Sigmoid colon (tissue), 7 donors: ENCODE measurements at regions of chr1 and their contacts with region 1.

Region 1: GRCh38 chr1:10628685-10629084 is 153.9 kb downstream of the PEX14 start:
- DNase-seq: peak; percentile 88
- H3K4me3 ChIP-seq: no peak overlapping the region
- H3K27ac ChIP-seq: peak overlapping the region; percentile 68 to 84 (median 72)
- H3K4me1 ChIP-seq: peaks cover 0 to 33% (median 24%) of the 10 kb centered on the region in 4 donors
- H3K27me3 ChIP-seq: no peaks in the 10 kb centered on the region
- CTCF ChIP-seq: no peak
- EP300 ChIP-seq: no peak
- POLR2A ChIP-seq: no peak

Region 2: GRCh38 chr1:10530281-10530740 is 98.4 kb before region 1 on chr1:
- intact Hi-C with region 1: loop called (anchors 2 kb)
- DNase-seq: peak; percentile 82
- H3K4me3 ChIP-seq: peak overlapping the region in 2 of 4 donors; percentile 5 to 18
- H3K27ac ChIP-seq: peak overlapping the region; percentile 25 to 90 (median 75)
- H3K4me1 ChIP-seq: peaks cover 0 to 55% (median 40%) of the 10 kb centered on the region in 4 donors
- H3K27me3 ChIP-seq: no peaks in the 10 kb centered on the region
- CTCF ChIP-seq: peak; percentile 69 to 81 (median 75)
- EP300 ChIP-seq: no peak
- POLR2A ChIP-seq: no peak

Region 3: DNA sequence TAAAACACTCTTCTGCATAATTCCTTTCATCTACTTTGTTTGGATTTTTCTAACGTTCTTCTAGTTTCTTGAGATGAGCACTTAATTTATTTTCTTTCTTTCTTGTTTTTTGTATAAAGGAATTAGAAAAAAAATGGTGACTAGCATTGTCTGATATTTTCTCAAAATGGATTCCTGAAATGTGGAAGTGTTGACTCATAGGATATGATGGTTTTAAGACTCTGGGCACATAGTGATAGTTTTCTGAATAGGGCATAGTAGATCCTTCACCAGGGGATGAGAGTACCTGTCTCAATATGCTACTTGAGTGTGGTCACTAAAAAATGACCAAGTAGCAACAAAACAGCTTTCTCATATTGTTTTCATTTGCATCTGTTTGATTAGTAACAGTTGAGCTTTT is 53.1 kb before region 1 on chr1:
- intact Hi-C with region 1: no loop called
- DNase-seq: no peak
- H3K4me3 ChIP-seq: no peak overlapping the region
- H3K27ac ChIP-seq: no peak overlapping the region
- H3K4me1 ChIP-seq: no peaks in the 10 kb centered on the region
- H3K27me3 ChIP-seq: no peaks in the 10 kb centered on the region
- CTCF ChIP-seq: no peak
- EP300 ChIP-seq: no peak
- POLR2A ChIP-seq: no peak

Region 4: GRCh38 chr1:10856863-10857598 is 228.3 kb after region 1 on chr1:
- intact Hi-C with region 1: loop called (anchors 10 kb)
- DNase-seq: no peak
- H3K4me3 ChIP-seq: no peak overlapping the region
- H3K27ac ChIP-seq: no peak overlapping the region
- H3K4me1 ChIP-seq: no peaks in the 10 kb centered on the region
- H3K27me3 ChIP-seq: no peaks in the 10 kb centered on the region
- CTCF ChIP-seq: no peak
- EP300 ChIP-seq: no peak
- POLR2A ChIP-seq: no peak